ENCODE measurements at regions of chr16 and their contacts with region 1.

Region 1: GRCh38 chr16:22240023-22240710 is 34.1 kb downstream of the EEF2K start:
- DNase-seq: no peak
- H3K4me3 Mint-ChIP-seq: no peak overlapping the region
- H3K27ac Mint-ChIP-seq: peak overlapping the region; percentile 96
- H3K4me1 Mint-ChIP-seq: peaks cover 36% of the 10 kb centered on the region
- H3K27me3 Mint-ChIP-seq: no peaks in the 10 kb centered on the region

Region 2: GRCh38 chr16:22252317-22252716 is 12.2 kb after region 1 on chr16:
- CTCF ChIA-PET with region 1: interaction called, 17 read pairs
- POLR2A ChIA-PET with region 1: no interaction called
- DNase-seq: no peak
- H3K4me3 Mint-ChIP-seq: no peak overlapping the region
- H3K27ac Mint-ChIP-seq: no peak overlapping the region
- H3K4me1 Mint-ChIP-seq: no peaks in the 10 kb centered on the region
- H3K27me3 Mint-ChIP-seq: no peaks in the 10 kb centered on the region